ENCODE measurements at regions of chr11 and their contacts with region 1.

Region 1: GRCh38 chr11:35391922-35392813 is 27.2 kb downstream of the SLC1A2 start:
- DNase-seq: peak; percentile 93
- H3K4me3 Mint-ChIP-seq: peak overlapping the region; percentile 17
- H3K27ac Mint-ChIP-seq: no peak overlapping the region
- H3K4me1 Mint-ChIP-seq: peaks cover 39% of the 10 kb centered on the region
- H3K27me3 Mint-ChIP-seq: no peaks in the 10 kb centered on the region

Region 2: GRCh38 chr11:34512840-34513681 is 879.1 kb before region 1 on chr11:
- CTCF ChIA-PET with region 1: interaction called, 4 read pairs
- intact Hi-C with region 1: loop called (anchors 5 kb)
- DNase-seq: peak; percentile 74
- H3K4me3 Mint-ChIP-seq: no peak overlapping the region
- H3K27ac Mint-ChIP-seq: no peak overlapping the region
- H3K4me1 Mint-ChIP-seq: no peaks in the 10 kb centered on the region
- H3K27me3 Mint-ChIP-seq: no peaks in the 10 kb centered on the region

Region 3: DNA sequence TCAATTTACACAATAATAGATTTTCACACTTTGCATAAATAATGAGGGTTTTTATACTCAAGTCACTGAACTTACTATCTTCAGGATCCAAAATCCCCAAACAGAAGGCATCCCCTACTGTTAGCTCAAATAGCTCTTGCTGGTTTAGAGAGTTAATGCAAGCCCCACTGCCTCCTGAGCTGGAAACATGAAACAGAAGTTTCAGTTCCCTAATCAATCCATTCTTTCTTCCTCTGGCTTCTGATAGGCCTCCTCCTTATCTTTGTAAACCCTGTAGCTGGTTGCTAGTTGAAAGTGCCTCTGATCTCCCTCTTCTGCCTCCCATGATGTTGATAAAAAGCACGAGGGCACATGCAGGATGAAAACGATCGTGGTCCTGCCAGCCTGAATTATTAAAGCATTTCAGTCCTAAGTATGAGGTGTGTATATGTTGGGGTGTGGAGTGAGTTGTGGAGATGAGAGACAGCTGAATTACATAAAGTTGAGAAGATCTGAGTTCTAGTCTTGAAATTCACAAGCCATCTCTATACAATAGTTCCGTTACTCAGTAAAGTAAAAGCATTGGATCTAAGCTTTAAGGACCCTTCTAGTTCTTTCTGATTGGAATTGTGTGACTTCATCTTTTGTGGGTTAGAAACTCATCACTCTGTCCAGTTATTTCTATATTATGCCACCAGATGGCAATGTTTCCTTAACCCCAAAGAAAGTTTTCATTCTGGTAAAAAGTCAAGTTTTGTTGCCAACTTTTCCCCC is 806.3 kb before region 1 on chr11:
- CTCF ChIA-PET with region 1: interaction called, 22 read pairs
- intact Hi-C with region 1: loop called (anchors 1 kb)
- DNase-seq: no peak
- H3K4me3 Mint-ChIP-seq: no peak overlapping the region
- H3K27ac Mint-ChIP-seq: no peak overlapping the region
- H3K4me1 Mint-ChIP-seq: peaks cover 4% of the 10 kb centered on the region
- H3K27me3 Mint-ChIP-seq: peaks cover 16% of the 10 kb centered on the region

Region 4: GRCh38 chr11:34916015-34916842 is 475.9 kb before region 1 on chr11 and contains the starts of genes APIP and PDHX:
- CTCF ChIA-PET with region 1: interaction called, 3 read pairs
- intact Hi-C with region 1: loop called (anchors 2 kb)
- DNase-seq: peak; percentile 98
- H3K4me3 Mint-ChIP-seq: peak within 1 kb of the TSS; percentile 99
- H3K27ac Mint-ChIP-seq: peak within 1 kb of the TSS; percentile 96
- H3K4me1 Mint-ChIP-seq: peaks cover 44% of the 10 kb centered on the region
- H3K27me3 Mint-ChIP-seq: no peaks in the 10 kb centered on the region
- total RNA-seq, gene APIP: 42.4 to 42.5 TPM
- total RNA-seq, gene PDHX: 38.2 to 40.9 TPM

Region 5: GRCh38 chr11:34997952-34998528 is 394.1 kb before region 1 on chr11:
- CTCF ChIA-PET with region 1: interaction called, 19 read pairs
- intact Hi-C with region 1: loop called (anchors 1 kb)
- DNase-seq: no peak
- H3K4me3 Mint-ChIP-seq: no peak overlapping the region
- H3K27ac Mint-ChIP-seq: peak overlapping the region; percentile 9
- H3K4me1 Mint-ChIP-seq: peaks cover 30% of the 10 kb centered on the region
- H3K27me3 Mint-ChIP-seq: no peaks in the 10 kb centered on the region

Region 6: GRCh38 chr11:35090125-35090524 is 302.0 kb before region 1 on chr11:
- CTCF ChIA-PET with region 1: no interaction called
- intact Hi-C with region 1: no loop called
- DNase-seq: no peak
- H3K4me3 Mint-ChIP-seq: no peak overlapping the region
- H3K27ac Mint-ChIP-seq: no peak overlapping the region
- H3K4me1 Mint-ChIP-seq: peaks cover 49% of the 10 kb centered on the region
- H3K27me3 Mint-ChIP-seq: no peaks in the 10 kb centered on the region

Region 7: GRCh38 chr11:35237860-35238715 is 154.1 kb before region 1 on chr11:
- CTCF ChIA-PET with region 1: interaction called, 6 read pairs
- intact Hi-C with region 1: loop called (anchors 1 kb)
- DNase-seq: peak; percentile 79
- H3K4me3 Mint-ChIP-seq: no peak overlapping the region
- H3K27ac Mint-ChIP-seq: peak overlapping the region; percentile 34
- H3K4me1 Mint-ChIP-seq: peaks cover 69% of the 10 kb centered on the region
- H3K27me3 Mint-ChIP-seq: no peaks in the 10 kb centered on the region

Region 8: DNA sequence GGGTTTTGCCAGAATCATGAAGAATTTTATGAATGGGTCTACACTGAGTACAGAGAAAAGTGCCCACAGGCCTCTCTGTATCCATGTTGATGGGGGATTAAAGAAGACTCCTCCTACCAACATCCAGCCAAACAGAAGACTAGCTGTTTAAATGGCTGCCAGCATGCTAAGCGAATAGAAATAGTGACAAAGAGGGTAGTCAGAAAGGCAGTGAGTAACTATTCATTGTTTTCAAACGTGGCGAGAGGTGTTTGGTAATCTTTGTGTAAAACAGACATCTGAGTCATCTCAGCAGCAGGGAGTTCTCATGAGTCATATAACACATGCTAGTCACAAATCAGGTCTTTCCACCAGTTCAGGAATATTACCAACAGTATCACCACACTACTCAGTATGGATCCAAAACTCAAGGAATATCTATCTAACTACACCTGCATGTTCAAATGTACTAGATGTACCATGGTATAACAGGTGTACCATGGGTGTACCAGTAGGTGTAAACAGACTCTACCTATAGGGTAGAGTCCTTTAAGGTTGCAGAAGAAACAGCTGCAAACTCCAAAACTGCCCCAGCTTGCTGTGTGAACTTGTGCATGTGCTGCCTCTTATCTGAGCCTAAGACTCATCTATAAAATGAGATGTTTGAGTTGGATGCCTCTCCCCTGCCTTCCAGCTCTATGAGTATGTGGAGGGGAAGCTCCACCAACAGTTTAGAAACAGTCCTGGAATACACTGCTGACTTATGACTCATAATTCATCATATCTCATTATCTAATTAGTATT is 54.8 kb before region 1 on chr11:
- CTCF ChIA-PET with region 1: interaction called, 4 read pairs
- intact Hi-C with region 1: loop called (anchors 2 kb)
- DNase-seq: peak; percentile 65
- H3K4me3 Mint-ChIP-seq: no peak overlapping the region
- H3K27ac Mint-ChIP-seq: peak overlapping the region; percentile 82
- H3K4me1 Mint-ChIP-seq: peaks cover 41% of the 10 kb centered on the region
- H3K27me3 Mint-ChIP-seq: no peaks in the 10 kb centered on the region

Region 9: DNA sequence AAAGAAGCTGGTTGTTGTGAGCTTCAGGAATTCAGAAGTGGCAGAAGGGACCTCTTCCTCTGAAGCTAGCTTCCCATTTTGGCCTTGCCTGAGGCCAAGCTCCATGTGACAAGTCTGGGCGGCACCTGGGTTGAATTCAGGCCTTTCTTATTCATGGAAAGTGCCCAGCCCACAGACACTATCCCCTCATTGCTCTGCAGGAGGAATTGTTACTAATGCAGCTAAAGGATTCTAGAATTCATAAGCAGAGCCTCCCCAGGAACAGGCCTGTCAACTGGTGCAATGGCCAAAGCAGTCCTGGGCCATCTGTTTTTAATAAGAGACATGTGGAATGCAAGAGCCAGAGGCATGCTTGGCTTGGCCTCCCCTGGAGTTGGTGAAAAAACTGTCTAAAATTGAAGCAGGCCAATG is 44.2 kb before region 1 on chr11:
- CTCF ChIA-PET with region 1: no interaction called
- intact Hi-C with region 1: no loop called
- DNase-seq: no peak
- H3K4me3 Mint-ChIP-seq: no peak overlapping the region
- H3K27ac Mint-ChIP-seq: no peak overlapping the region
- H3K4me1 Mint-ChIP-seq: peaks cover 59% of the 10 kb centered on the region
- H3K27me3 Mint-ChIP-seq: no peaks in the 10 kb centered on the region

Region 10: DNA sequence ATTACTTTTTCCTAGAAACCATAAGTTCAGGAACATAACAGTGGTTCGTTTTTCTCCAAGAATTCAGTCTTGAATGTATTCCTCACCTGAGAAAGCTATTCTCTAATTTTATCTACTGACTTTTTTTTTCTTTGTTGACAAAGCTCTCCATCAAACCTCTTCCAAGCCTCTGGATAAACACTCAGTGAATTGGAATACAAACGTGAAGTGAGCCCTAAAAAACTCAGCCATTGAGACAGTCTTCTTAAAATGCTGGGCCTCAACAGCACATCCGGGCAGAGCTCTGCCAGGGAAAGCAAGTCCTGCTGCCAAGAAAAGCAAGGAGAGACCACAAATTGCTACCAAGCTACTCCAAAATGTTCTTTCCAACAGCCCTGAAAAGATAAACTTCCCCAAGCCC is 34.9 kb after region 1 on chr11:
- CTCF ChIA-PET with region 1: no interaction called
- intact Hi-C with region 1: no loop called
- DNase-seq: no peak
- H3K4me3 Mint-ChIP-seq: no peak overlapping the region
- H3K27ac Mint-ChIP-seq: no peak overlapping the region
- H3K4me1 Mint-ChIP-seq: no peaks in the 10 kb centered on the region
- H3K27me3 Mint-ChIP-seq: peaks cover 34% of the 10 kb centered on the region

Region 11: DNA sequence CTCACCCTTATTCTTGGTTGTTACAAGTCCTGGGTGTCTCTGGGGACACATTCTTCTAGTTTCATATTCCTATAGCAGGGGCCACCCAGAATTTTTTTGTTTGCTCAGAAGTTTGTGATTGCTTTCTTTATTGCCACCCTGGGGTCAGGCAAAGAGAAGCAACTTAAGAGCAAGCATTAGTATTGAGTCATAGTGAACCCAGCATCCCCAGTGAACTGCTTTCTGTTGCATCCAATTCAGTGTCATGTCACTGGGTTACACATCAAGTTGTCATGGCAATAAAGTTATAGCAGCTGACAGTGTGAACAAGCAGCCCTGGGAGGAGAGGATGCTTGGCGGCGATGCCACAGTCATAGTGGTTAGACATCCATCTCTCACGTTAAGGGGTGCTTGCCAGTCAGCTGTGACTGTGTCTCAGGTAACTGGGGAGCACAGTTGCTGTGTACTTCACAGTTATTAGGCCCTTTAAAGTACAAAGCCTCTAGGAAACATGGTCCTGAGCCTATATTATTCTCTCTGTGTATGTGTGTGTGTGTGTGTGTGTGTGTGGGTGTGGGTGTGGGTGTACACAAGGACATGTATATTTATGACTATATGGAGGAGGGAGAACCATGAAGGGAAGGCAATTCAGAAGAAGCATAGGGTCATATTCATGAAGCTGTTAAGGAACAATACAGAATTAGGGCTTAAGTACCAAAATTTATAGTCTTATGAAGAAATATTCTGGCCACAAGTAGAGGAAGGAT is 322.9 kb after region 1 on chr11:
- CTCF ChIA-PET with region 1: no interaction called
- intact Hi-C with region 1: no loop called
- DNase-seq: peak; percentile 64
- H3K4me3 Mint-ChIP-seq: no peak overlapping the region
- H3K27ac Mint-ChIP-seq: peak overlapping the region; percentile 20
- H3K4me1 Mint-ChIP-seq: peaks cover 31% of the 10 kb centered on the region
- H3K27me3 Mint-ChIP-seq: no peaks in the 10 kb centered on the region

Measured in activated naive CD4-positive, alpha-beta T cell treated with anti-CD3 and anti-CD28 coated beads for 36 hours (primary cell).